ENCODE measurements at regions of chr11 and their contacts with region 1.

Region 1: GRCh38 chr11:115290893-115291292 is 213.3 kb downstream of the CADM1 start:
- DNase-seq: no peak
- ATAC-seq: no peak
- H3K4me3 ChIP-seq: no peak overlapping the region
- H3K27ac ChIP-seq: no peak overlapping the region
- H3K4me1 ChIP-seq: no peaks in the 10 kb centered on the region
- H3K27me3 ChIP-seq: no peaks in the 10 kb centered on the region
- CTCF ChIP-seq: no peak
- POLR2A ChIP-seq: no peak

Region 2: DNA sequence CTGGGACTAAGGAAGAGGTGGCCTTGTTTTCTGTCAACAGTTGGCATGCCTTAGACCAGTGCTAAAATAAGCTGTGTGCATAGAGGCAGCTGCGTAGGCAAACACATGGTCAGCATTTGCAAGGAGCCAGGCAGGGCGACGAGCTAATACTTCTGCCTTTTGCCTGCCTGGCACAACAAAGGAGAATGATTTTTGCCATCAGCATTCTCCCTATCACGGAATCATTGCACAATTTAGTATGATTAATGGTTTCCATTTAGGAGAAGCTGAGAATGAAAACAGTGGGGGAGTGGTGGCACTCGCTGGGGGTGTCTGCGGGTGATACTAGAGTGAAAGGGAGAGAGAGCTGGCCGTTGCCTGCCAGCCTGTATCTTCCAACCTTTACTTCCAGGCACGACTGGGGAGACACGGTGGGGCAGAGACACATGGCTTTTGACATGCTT is 122.6 kb before region 1 on chr11:
- in situ Hi-C with region 1: no loop called
- intact Hi-C with region 1: loop called (anchors 10 kb)
- DNase-seq: peak; percentile 67
- ATAC-seq: peak; percentile 95 to 97
- H3K4me3 ChIP-seq: peak overlapping the region; percentile 2 to 25 (median 18)
- H3K27ac ChIP-seq: peak overlapping the region; percentile 72 to 87 (median 76)
- H3K4me1 ChIP-seq: peaks cover 25 to 31% of the 10 kb centered on the region in 2 donors
- H3K27me3 ChIP-seq: no peaks in the 10 kb centered on the region
- CTCF ChIP-seq: no peak
- POLR2A ChIP-seq: no peak

Region 3: GRCh38 chr11:115362997-115363396 is 72.1 kb after region 1 on chr11:
- in situ Hi-C with region 1: no loop called
- intact Hi-C with region 1: no loop called
- DNase-seq: peak in 1 of 2 donors; percentile 14
- ATAC-seq: no peak
- H3K4me3 ChIP-seq: no peak overlapping the region
- H3K27ac ChIP-seq: no peak overlapping the region
- H3K4me1 ChIP-seq: no peaks in the 10 kb centered on the region
- H3K27me3 ChIP-seq: no peaks in the 10 kb centered on the region
- CTCF ChIP-seq: no peak
- POLR2A ChIP-seq: no peak

Measured in gastrocnemius medialis (tissue), 4 donors.